Gastrocnemius medialis (tissue), 4 donors: ENCODE measurements at regions of chr1 and their contacts with region 1.

Region 1: DNA sequence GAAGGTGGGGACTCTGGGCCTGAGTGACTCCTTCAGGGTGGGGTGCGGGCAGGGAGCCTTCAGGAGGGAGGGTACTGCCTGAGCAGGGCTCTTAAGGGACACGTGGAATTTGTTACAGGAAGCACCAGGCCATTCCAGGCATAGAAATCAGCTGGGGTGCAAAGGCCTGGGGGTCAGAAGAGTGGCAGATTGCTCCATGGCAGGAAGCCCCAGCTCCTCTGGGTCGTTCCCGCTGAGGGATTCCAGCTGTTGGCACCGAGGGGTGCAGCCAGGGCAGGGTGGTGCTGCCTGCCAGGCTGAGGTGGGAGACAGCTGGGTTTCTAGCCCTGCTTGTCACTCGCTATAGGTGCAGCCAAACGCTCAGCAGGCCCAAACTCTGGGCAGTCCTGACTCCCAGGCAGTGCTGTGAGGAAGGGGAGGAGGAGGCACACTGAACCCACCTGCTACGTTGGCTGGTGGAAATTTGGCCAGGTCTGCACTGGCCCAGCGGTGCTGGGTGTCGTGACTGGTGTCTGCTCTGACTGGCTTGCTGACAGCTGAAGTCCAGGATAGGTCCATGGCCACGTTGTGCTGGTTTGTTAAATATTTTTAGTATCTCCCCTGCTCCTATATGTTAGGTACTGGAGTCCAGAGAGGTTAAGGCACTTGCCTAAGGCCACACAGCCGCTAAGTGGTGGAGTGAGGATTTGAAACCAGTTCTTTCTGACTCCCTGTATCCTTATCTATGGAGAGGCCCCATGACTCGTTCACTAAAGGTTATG is 19.3 kb downstream of the TNFRSF1B start:
- DNase-seq: peak in 1 of 2 donors; percentile 54
- ATAC-seq: peak in 1 of 2 donors; percentile 48
- H3K4me3 ChIP-seq: peak overlapping the region in 1 of 4 donors; percentile 48
- H3K27ac ChIP-seq: peak overlapping the region; percentile 74 to 88 (median 86)
- H3K4me1 ChIP-seq: peaks cover 35 to 51% of the 10 kb centered on the region in 2 donors
- H3K27me3 ChIP-seq: peaks cover 0 to 4% (median 0%) of the 10 kb centered on the region in 3 donors
- CTCF ChIP-seq: no peak
- POLR2A ChIP-seq: no peak

Region 2: DNA sequence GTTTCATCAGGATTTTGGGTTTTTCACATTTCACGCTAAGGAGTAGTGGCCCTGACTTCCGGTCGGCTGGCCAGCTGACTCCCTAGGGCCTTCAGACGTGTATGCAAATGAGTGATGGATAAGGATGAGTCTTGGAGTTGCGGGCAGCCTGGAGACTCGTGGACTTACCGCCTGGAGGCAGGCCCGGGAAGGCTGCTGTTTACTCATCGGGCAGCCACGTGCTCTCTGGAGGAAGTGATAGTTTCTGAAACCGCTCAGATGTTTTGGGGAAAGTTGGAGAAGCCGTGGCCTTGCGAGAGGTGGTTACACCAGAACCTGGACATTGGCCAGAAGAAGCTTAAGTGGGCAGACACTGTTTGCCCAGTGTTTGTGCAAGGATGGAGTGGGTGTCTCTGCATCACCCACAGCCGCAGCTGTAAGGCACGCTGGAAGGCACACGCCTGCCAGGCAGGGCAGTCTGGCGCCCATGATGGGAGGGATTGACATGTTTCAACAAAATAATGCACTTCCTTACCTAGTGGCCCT is 42.4 kb before region 1 on chr1:
- in situ Hi-C with region 1: no loop called
- intact Hi-C with region 1: loop called (anchors 5 kb)
- DNase-seq: peak; percentile 74 to 81
- ATAC-seq: peak; percentile 73 to 79
- H3K4me3 ChIP-seq: no peak overlapping the region
- H3K27ac ChIP-seq: peak overlapping the region; percentile 40 to 66 (median 66)
- H3K4me1 ChIP-seq: peaks cover 8 to 13% of the 10 kb centered on the region in 2 donors
- H3K27me3 ChIP-seq: no peaks in the 10 kb centered on the region
- CTCF ChIP-seq: no peak
- POLR2A ChIP-seq: peak in 1 of 2 donors; percentile 12

Region 3: DNA sequence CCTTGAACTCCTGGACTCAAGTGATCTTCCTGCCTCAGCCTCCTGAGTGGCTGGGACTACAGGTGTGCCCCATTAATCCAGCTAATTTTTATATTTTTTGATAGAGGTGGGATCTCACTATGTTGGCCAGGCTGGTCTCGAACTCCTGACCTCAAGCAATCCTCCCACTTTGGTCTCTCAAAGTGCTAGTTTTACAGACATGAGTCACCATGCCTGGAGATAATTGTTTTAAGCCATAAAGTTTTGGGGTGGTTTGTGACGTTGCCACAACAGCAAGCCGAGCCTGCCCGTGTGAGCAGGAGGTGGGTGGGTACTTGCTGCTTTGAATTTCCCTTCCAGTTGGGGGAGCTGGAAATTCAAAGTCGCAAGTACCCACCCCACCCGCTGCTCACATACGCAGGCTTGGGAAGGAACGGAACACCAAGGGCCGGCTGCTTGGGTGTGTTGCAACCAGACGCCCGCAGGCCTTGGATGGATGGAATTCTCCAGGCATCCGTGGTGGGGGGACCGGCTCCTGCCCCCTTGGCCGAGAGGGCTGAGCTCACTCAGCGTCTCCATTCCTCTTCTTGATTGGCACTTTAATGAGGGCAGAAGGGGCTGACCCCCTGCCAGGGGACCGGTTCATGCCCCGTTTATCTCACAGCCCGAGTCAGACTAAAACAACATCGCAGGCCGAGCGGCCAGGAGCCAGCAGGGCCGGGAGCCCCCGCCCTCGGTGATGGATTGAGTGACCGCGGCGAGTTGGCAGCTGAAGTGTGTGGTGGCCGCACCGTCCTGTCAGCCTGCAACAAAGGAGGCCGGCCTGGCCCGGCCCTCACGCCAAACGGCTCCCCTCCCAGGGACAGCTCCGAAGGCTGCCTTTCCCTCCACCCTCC is 353.8 kb after region 1 on chr1:
- in situ Hi-C with region 1: no loop called
- intact Hi-C with region 1: no loop called
- DNase-seq: peak; percentile 77 to 89
- ATAC-seq: peak; percentile 83 to 91
- H3K4me3 ChIP-seq: peak overlapping the region; percentile 22 to 40 (median 37)
- H3K27ac ChIP-seq: peak overlapping the region; percentile 75 to 83 (median 81)
- H3K4me1 ChIP-seq: peaks cover 13 to 18% of the 10 kb centered on the region in 2 donors
- H3K27me3 ChIP-seq: no peaks in the 10 kb centered on the region
- CTCF ChIP-seq: no peak
- POLR2A ChIP-seq: peak in 1 of 2 donors; percentile 12

Region 4: DNA sequence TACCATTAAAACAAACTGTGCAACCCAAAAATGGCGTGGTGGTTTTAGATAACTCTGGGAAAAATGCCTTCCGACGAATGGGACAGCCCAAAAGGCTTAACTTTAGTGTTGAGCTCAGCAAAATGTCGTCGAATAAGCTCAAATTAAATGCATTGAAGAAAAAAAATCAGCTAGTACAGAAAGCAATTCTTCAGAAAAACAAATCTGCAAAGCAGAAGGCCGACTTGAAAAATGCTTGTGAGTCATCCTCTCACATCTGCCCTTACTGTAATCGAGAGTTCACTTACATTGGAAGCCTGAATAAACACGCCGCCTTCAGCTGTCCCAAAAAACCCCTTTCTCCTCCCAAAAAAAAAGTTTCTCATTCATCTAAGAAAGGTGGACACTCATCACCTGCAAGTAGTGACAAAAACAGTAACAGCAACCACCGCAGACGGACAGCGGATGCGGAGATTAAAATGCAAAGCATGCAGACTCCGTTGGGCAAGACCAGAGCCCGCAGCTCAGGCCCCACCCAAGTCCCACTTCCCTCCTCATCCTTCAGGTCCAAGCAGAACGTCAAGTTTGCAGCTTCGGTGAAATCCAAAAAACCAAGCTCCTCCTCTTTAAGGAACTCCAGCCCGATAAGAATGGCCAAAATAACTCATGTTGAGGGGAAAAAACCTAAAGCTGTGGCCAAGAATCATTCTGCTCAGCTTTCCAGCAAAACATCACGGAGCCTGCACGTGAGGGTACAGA is 1596.0 kb after region 1 on chr1:
- in situ Hi-C with region 1: no loop called
- intact Hi-C with region 1: no loop called
- DNase-seq: no peak
- ATAC-seq: no peak
- H3K4me3 ChIP-seq: no peak overlapping the region
- H3K27ac ChIP-seq: no peak overlapping the region
- H3K4me1 ChIP-seq: peaks cover 24 to 29% of the 10 kb centered on the region in 2 donors
- H3K27me3 ChIP-seq: no peaks in the 10 kb centered on the region
- CTCF ChIP-seq: no peak
- POLR2A ChIP-seq: no peak